ENCODE measurements at regions of chr2 and their contacts with region 1.

Region 1: DNA sequence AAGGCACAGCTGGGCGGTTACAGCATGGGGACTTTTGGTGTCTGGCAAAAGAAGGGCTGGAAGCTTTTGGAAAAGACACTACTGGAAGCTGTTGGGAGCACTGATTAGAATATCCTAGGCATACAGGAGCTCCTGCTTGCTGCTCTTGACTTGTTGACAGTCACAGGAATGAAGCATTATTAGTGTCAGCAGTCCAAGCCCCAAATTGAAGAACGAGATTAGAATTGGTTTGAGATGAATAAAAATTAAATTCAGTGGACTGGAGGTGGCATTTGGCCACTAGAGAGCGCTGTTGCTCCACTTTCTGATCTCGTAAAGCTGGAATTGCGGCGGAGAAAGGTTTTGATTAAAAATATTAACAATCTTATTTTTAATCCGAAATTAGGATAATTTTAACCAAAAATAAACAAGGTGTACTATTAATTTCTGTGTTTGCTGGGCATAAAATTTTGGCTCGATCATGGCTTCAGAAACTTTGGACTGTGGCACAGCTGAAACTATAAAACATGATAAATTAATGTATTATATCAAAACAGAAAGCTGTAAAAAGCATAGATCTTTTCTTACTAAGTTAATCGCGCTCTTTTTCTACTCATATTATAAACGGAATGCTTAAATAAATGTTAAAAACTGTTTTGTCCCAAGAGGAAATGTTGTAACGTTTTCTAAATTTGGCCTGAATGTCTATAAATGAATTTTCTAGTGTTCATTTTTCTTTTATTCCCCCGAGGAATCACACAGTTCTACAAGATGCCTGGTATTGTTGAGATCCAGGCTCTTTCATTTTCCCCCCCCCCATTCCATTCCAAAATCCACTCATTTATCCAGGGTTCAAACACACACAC is 2.4 kb upstream of the HOXD8 start:
- DNase-seq: peak; percentile 81
- ATAC-seq: no peak
- H3K4me3 Mint-ChIP-seq: no peak overlapping the region
- H3K27ac Mint-ChIP-seq: no peak overlapping the region
- H3K4me1 Mint-ChIP-seq: peaks cover 31% of the 10 kb centered on the region
- H3K27me3 Mint-ChIP-seq: peaks cover 67% of the 10 kb centered on the region

Region 2: GRCh38 chr2:176110975-176111663 is 16.0 kb before region 1 on chr2:
- CTCF ChIA-PET with region 1: interaction called, 20 read pairs
- POLR2A ChIA-PET with region 1: no interaction called
- intact Hi-C with region 1: loop called in 1 of 2 experiments (anchors 2 kb)
- DNase-seq: peak; percentile 60
- ATAC-seq: no peak
- H3K4me3 Mint-ChIP-seq: no peak overlapping the region
- H3K27ac Mint-ChIP-seq: no peak overlapping the region
- H3K4me1 Mint-ChIP-seq: peaks cover 13% of the 10 kb centered on the region
- H3K27me3 Mint-ChIP-seq: peaks cover 70% of the 10 kb centered on the region

Region 3: DNA sequence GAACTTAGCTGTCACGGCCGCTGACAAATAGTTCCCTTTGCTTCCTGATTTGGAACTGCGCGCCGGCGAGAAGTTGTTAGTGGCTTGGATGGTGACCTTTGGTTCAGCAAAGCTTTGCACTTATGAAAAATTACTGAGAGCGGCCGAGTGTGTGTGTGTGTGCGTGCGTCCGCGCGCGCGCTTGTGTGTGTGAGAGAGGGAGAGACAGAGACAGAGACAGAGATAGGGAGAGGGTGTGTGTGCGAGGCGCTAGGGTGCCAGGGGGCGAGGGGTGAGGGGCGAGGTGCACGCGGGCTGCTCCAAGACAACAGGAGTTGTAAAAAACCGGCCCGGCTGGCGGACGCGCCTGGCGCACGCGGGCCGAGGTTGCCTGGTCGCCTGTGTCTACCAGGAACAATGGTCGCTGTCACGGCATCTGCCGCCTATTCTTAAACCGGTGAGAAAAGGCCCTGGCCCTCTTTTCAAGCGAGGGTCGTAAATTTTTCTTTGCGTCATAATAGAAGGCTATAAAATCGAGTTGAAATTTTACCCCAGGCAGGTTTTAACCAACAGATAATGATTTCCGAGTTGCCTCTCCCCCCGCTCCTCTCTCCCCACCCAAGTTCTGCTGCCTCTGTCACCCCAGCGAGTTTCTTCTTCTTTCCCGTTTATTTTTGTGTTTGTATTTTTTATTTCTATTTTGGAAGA is 30.5 kb after region 1 on chr2:
- CTCF ChIA-PET with region 1: interaction called, 18 read pairs
- POLR2A ChIA-PET with region 1: no interaction called
- intact Hi-C with region 1: loop called (anchors 5 kb)
- DNase-seq: peak; percentile 39
- ATAC-seq: no peak
- H3K4me3 Mint-ChIP-seq: peak overlapping the region; percentile 32
- H3K27ac Mint-ChIP-seq: no peak overlapping the region
- H3K4me1 Mint-ChIP-seq: peaks cover 13% of the 10 kb centered on the region
- H3K27me3 Mint-ChIP-seq: peaks cover 67% of the 10 kb centered on the region

Region 4: DNA sequence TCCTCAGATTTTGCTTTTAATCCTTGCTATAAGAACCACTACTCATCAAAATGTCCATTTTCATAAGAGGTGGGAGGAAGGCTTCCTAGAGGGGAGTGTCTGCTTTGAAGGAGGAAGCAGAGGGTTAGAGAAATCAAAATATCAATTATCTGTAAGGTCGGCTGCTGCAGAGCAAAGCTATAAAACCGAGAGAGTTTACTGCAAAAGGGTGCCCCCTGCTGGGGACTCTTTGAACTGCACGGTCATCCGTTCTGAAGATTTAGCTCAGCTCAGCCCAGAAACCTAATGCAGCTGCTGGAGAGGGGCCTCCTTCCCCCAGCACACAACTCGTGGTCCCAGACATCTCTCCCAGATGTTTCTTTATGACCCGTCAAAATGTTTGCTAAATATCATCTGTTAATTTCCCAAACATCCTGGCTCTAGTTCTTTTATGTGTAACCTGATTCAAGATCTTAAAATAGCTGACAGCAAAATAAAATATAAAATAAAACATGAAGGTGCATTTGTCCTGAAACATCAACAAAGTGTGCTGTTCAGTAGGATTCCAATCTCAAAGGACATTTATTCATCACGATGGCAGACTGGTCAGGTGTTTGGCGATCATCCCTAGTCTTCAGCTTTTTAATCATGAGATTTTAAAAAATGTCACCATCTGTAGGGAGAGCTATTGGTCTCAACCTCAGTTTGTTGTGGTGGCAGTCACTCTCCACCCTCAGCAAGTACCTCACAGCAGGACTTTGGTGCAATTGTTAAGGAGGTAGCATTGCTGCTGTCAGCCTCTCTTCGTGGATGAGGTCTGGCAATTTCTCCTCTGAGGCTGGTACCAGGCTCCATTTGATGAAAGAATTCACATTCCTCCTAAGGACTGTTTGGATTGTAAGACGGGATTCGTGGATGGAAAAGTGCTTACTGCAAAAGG is 328.0 kb after region 1 on chr2:
- CTCF ChIA-PET with region 1: interaction called, 63 read pairs
- POLR2A ChIA-PET with region 1: no interaction called
- intact Hi-C with region 1: loop called (anchors 1 kb)
- DNase-seq: peak; percentile 91
- ATAC-seq: peak; percentile 57
- H3K4me3 Mint-ChIP-seq: no peak overlapping the region
- H3K27ac Mint-ChIP-seq: no peak overlapping the region
- H3K4me1 Mint-ChIP-seq: no peaks in the 10 kb centered on the region
- H3K27me3 Mint-ChIP-seq: peaks cover 31% of the 10 kb centered on the region

Region 5: DNA sequence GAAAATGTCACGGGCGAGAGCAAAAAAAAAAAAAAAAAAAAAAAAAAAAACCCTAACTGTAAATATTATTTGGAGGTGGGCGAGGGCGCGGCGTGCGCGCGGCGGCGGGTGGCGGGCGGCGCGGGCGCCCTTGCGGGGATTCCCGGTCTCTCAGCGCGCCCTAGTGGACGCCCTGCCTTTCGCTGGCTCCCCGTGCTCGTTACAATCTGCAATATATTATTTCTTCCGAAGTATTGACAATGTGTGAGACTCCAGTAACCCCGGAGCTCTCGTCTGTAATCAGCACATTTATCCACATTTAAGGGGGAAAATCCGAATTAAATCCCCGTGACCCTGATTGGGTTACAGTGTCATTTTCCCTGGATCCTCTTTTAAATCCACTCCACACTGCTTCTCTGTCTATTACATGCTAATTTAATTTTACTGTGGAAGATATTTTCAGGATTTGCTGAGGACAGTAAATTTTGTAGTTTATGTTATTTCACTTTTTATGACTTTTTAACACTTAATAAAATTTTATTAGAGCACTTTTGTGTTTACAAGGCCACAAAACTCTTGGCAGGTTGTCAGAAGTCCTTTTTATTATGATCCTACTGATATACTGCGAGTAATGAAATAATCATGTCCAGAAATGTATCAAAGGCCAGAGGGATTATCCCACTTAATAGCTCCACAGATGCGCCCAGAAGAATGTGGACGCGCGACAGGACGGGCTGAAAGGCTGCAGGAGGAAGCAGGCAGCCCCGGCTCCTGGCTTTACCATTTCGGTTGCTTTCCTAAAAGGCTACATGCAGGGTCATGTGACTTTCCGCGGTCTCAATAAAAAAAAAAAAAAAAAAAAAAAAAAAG is 511.2 kb after region 1 on chr2:
- CTCF ChIA-PET with region 1: interaction called, 17 read pairs
- POLR2A ChIA-PET with region 1: no interaction called
- intact Hi-C with region 1: loop called (anchors 1 to 5 kb)
- DNase-seq: peak; percentile 80
- ATAC-seq: peak; percentile 86
- H3K4me3 Mint-ChIP-seq: peak overlapping the region; percentile 55
- H3K27ac Mint-ChIP-seq: no peak overlapping the region
- H3K4me1 Mint-ChIP-seq: peaks cover 5% of the 10 kb centered on the region
- H3K27me3 Mint-ChIP-seq: peaks cover 44% of the 10 kb centered on the region

Region 6: GRCh38 chr2:176814306-176815052 is 687.3 kb after region 1 on chr2:
- CTCF ChIA-PET with region 1: no interaction called
- POLR2A ChIA-PET with region 1: no interaction called
- intact Hi-C with region 1: loop called (anchors 1 to 5 kb)
- DNase-seq: peak; percentile 9
- ATAC-seq: peak; percentile 43
- H3K4me3 Mint-ChIP-seq: no peak overlapping the region
- H3K27ac Mint-ChIP-seq: no peak overlapping the region
- H3K4me1 Mint-ChIP-seq: peaks cover 14% of the 10 kb centered on the region
- H3K27me3 Mint-ChIP-seq: no peaks in the 10 kb centered on the region

Measured in activated CD4-positive, alpha-beta T cell treated with anti-CD3 and anti-CD28 coated beads for 36 hours (primary cell).